Endothelial cell of umbilical vein (primary cell): ENCODE measurements at regions of chr12 and their contacts with region 1.

Region 1: DNA sequence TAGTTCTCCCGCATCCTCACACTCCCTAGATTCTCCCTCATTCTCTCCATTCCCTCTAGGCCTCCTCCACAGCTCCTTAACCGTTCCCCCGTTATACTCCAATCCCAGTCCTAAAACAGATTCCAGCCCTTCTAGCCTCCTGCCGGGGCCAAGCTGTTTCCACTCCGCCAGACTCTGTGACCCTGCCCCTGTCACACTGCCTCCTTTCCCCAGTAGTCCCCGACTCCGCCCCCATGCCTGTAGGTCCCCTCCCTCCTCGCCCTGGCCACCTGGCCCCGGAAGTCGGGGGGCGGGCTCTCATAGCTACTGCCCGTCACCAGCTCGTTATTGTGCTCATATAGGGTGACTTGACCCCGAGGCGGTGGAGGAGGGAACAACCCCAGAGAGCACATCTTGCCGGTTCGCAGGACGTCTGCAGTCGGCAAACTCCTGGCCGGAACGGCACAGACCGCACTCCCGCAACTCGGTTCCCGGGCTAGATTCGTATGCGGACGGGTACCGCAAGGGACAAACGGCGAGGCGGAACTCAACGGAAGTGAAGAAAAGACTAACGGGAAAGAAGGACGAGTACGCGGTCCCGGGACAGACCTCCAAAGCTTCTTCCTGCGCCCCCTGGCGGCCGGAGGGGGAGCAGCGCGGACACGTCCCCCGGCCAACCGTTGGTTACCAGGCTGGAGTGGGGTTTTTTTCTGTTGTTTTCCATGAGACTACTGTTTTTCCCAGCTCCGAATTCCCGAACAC is at the start of gene AAAS:
- DNase-seq: peak; percentile 97
- H3K4me3 ChIP-seq: peak within 1 kb of the TSS; percentile 65 to 81 (median 68)
- H3K27ac ChIP-seq: peak within 1 kb of the TSS; percentile 74
- H3K4me1 ChIP-seq: peaks cover 24% of the 10 kb centered on the region
- H3K27me3 ChIP-seq: no peaks in the 10 kb centered on the region
- CTCF ChIP-seq: peak; percentile 99 to 100
- POLR2A ChIP-seq: peak; percentile 69
- total RNA-seq, gene AAAS: 57.8 and 60.0 TPM in 2 replicates

Region 2: GRCh38 chr12:52992699-52993557 is 328.3 kb before region 1 on chr12:
- CTCF ChIA-PET with region 1: no interaction called
- POLR2A ChIA-PET with region 1: no interaction called
- dilution Hi-C with region 1: no loop called
- intact Hi-C with region 1: no loop called
- DNase-seq: no peak
- H3K4me3 ChIP-seq: no peak overlapping the region
- H3K27ac ChIP-seq: no peak overlapping the region
- H3K4me1 ChIP-seq: no peaks in the 10 kb centered on the region
- H3K27me3 ChIP-seq: peaks cover 0 to 2% of the 10 kb centered on the region in 2 experiments
- CTCF ChIP-seq: no peak
- POLR2A ChIP-seq: no peak

Region 3: DNA sequence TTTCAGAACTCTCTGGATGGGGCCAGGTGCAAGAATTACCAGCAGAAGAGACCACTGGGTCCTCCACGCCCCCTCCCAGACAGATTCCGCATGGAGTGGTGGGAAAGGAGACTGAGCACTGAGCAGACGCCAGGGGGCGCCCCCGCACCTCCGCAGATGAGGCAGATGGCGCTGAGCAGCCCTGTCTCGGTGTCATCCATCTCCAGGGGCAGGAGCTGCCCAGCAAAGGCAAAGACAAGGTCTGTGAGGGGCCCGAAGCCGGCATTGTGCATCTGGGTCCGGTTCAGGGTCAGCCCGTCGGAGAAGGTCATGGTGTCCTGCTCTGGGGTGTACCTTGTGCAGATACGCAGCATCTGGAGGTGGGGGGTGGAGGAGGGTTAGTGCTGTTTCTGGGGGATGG is 107.9 kb before region 1 on chr12:
- CTCF ChIA-PET with region 1: interaction called, 144 read pairs
- POLR2A ChIA-PET with region 1: interaction called, 6 read pairs
- dilution Hi-C with region 1: no loop called
- intact Hi-C with region 1: loop called (anchors 1 kb)
- DNase-seq: peak; percentile 69
- H3K4me3 ChIP-seq: no peak overlapping the region
- H3K27ac ChIP-seq: no peak overlapping the region
- H3K4me1 ChIP-seq: peaks cover 31% of the 10 kb centered on the region
- H3K27me3 ChIP-seq: no peaks in the 10 kb centered on the region
- CTCF ChIP-seq: peak; percentile 87 to 95
- POLR2A ChIP-seq: no peak

Region 4: GRCh38 chr12:53295070-53295890 is 26.0 kb before region 1 on chr12 and contains the start of gene PFDN5:
- CTCF ChIA-PET with region 1: interaction called, 36 read pairs
- POLR2A ChIA-PET with region 1: interaction called, 5 read pairs
- dilution Hi-C with region 1: no loop called
- intact Hi-C with region 1: loop called (anchors 1 kb)
- DNase-seq: peak; percentile 96
- H3K4me3 ChIP-seq: peak within 1 kb of the TSS; percentile 71 to 82 (median 82)
- H3K27ac ChIP-seq: peak within 1 kb of the TSS; percentile 63
- H3K4me1 ChIP-seq: peaks cover 31% of the 10 kb centered on the region
- H3K27me3 ChIP-seq: no peaks in the 10 kb centered on the region
- CTCF ChIP-seq: no peak
- POLR2A ChIP-seq: peak; percentile 84
- total RNA-seq, gene PFDN5: 286 and 301 TPM in 2 replicates

Region 5: GRCh38 chr12:53344824-53345485 is 23.7 kb after region 1 on chr12:
- CTCF ChIA-PET with region 1: interaction called, 225 read pairs
- POLR2A ChIA-PET with region 1: interaction called, 10 read pairs
- dilution Hi-C with region 1: no loop called
- intact Hi-C with region 1: no loop called
- DNase-seq: peak; percentile 72
- H3K4me3 ChIP-seq: peak overlapping the region; percentile 43 to 47 (median 45)
- H3K27ac ChIP-seq: peak overlapping the region; percentile 40
- H3K4me1 ChIP-seq: peaks cover 13% of the 10 kb centered on the region
- H3K27me3 ChIP-seq: peaks cover 0 to 4% of the 10 kb centered on the region in 2 experiments
- CTCF ChIP-seq: peak; percentile 57 to 86
- POLR2A ChIP-seq: peak; percentile 70

Region 6: DNA sequence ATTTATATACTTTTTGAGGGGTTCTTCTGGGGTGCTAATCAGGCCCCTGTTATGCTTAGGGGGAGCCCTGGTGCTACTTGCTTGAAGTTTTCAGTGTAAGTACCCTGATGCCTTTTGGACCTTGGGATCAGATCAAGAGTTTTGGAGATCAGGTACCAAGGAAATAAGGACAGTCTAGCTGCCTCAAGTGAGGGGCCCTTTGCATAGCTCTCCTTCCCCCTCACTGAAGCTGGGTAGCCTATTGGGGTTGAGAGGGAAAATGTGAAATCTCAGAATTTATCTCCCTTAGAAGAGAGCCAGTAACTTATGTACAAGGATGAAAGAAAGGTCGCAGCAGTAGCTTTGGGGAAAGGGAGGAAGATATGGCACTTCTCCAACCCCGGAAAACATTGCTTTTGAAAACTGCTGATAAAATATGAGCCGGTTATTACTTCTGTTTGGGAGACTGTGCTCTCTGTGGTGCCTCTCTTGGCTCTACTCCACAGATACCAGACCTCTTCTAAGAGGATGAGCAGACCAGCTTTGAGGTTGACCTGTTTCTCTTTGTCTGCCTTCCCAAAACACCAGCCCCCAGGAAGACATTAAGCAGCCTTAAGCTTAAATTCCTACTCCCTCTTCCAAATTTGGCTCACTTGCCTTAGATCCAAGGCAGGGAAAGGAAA is 93.6 kb after region 1 on chr12:
- CTCF ChIA-PET with region 1: interaction called, 71 read pairs
- POLR2A ChIA-PET with region 1: interaction called, 3 read pairs
- dilution Hi-C with region 1: no loop called
- intact Hi-C with region 1: no loop called
- DNase-seq: peak; percentile 32
- H3K4me3 ChIP-seq: no peak overlapping the region
- H3K27ac ChIP-seq: no peak overlapping the region
- H3K4me1 ChIP-seq: peaks cover 24% of the 10 kb centered on the region
- H3K27me3 ChIP-seq: no peaks in the 10 kb centered on the region
- CTCF ChIP-seq: no peak
- POLR2A ChIP-seq: no peak

Region 7: DNA sequence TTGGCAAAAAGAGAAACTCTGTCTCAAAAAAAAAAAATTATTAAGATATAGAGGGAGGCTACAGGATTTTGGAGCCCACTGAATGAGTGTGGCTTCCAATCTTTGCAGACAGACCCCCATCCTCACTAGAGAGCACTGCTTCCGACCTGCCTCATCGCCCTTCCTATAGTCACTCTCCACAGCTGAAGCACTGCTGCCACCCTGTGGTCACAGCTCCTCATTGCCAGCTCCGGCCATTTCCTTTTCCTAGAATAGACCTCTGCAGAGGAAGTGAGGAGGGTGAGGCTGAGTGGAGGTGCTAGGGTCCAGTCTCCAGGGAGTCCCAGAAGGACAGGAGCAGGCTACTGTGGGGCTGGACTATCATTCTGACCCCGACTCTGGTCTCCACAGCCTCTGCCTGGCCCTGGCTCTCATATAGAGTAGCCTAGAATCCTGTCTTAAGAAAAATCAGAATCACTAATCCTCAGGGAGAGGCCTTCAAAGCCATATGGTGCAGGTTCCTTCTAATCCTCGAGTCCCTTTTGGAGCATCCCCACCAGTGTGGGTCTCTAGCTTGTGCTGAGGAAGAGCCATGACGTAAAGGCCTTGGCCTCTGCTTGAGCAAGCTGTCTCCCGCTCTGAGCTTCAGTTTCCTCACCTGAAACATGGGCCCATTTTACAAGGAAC is 187.4 kb after region 1 on chr12:
- CTCF ChIA-PET with region 1: interaction called, 20 read pairs
- POLR2A ChIA-PET with region 1: no interaction called
- dilution Hi-C with region 1: no loop called
- intact Hi-C with region 1: loop called (anchors 1 kb)
- DNase-seq: peak; percentile 89
- H3K4me3 ChIP-seq: no peak overlapping the region
- H3K27ac ChIP-seq: no peak overlapping the region
- H3K4me1 ChIP-seq: peaks cover 3% of the 10 kb centered on the region
- H3K27me3 ChIP-seq: no peaks in the 10 kb centered on the region
- CTCF ChIP-seq: peak; percentile 90 to 94
- POLR2A ChIP-seq: no peak